IMR-90 (cell line): ENCODE measurements at regions of chr2 and their contacts with region 1.

Region 1: GRCh38 chr2:186589612-186590349 is at the start of gene ITGAV:
- DNase-seq: peak; percentile 88
- ATAC-seq: peak; percentile 97
- H3K4me3 ChIP-seq: peak within 1 kb of the TSS; percentile 83
- H3K27ac ChIP-seq: peak within 1 kb of the TSS; percentile 83
- H3K4me1 ChIP-seq: peaks cover 8% of the 10 kb centered on the region
- H3K27me3 ChIP-seq: no peaks in the 10 kb centered on the region
- CTCF ChIP-seq: no peak
- POLR2A ChIP-seq: peak; percentile 96
- RAD21 ChIP-seq: no peak
- total RNA-seq, gene ITGAV: 181 and 204 TPM in 2 replicates

Region 2: DNA sequence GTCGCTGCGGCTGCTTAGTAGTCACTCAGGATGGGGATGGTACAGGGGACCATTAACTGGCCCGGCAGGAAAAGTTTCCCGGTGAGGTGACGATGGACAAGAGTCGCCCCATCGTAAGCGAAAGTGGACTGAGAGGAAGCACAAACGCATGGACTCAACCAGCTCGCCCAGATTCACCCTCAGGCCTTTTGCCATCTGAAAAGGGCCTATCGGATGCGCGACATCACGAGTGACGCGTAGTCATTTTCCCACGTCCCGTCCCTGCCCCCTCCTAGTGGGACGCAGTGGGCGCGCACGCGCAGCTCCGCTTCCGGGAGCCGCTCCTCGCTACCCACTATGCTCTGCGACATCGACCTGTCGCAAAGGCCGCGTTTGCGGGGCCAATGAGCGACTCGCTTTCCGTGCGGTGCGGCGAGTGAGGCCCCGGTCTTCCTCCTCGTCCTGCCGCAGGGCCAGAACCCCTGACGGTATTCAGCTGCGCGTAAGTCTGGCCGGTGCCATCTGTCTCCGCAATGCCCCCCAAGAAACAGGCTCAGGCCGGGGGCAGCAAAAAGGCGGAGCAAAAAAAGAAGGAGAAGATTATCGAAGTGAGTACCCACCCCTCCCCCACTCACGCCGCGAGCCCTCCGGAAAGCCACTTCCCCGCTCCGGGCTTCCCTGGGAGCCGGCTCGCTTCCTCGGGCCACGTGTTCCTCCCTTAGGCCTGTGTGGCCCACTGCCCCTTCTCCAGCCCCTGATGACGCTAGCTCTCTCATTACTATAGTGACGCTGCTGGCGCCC is 103.7 kb before region 1 on chr2 and contains the start of gene ZC3H15:
- CTCF ChIA-PET with region 1: no interaction called
- POLR2A ChIA-PET with region 1: no interaction called
- dilution Hi-C with region 1: no loop called
- in situ Hi-C with region 1: no loop called
- intact Hi-C with region 1: no loop called
- DNase-seq: peak; percentile 98
- ATAC-seq: peak; percentile 98
- H3K4me3 ChIP-seq: peak within 1 kb of the TSS; percentile 71
- H3K27ac ChIP-seq: peak within 1 kb of the TSS; percentile 93
- H3K4me1 ChIP-seq: peaks cover 2% of the 10 kb centered on the region; the same call in 1 of the 2 replicates
- H3K27me3 ChIP-seq: no peaks in the 10 kb centered on the region
- CTCF ChIP-seq: no peak
- POLR2A ChIP-seq: peak; percentile 97
- RAD21 ChIP-seq: peak; percentile 0; the same call in 1 of the 2 replicates
- total RNA-seq, gene ZC3H15: 22.9 and 65.0 TPM in 2 replicates

Region 3: DNA sequence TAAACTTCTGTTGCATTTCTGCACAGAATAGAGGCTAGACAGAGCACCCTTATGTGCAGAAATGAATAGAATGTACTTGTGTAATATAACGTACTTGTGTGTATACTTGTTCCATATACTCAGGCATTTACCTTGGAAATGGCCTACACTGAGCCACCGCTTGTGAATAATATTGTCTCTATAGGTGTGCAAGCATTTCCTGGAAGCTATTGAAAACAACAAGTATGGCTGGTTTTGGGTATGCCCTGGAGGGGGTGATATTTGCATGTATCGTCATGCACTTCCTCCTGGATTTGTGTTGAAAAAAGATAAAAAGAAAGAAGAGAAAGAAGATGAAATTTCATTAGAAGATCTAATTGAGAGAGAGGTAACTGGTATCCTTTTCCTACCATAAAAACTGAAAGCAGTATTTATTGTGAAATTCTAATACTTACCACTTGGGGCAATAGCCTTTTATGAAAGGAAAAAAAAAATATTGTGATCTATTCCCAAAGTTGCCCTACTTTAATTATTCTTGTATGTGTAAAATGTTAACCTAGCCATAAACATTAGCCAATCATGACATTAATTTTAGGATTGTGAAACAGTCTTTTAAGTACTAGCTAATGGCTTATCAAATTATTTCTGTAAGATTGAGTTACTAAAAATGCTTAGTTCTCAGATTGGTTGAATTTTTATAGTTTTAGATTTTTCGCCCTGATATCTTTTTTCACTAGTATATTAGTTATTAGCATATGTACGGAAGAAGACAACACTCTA is 85.8 kb before region 1 on chr2:
- CTCF ChIA-PET with region 1: interaction called, 3 read pairs
- POLR2A ChIA-PET with region 1: no interaction called
- dilution Hi-C with region 1: no loop called
- in situ Hi-C with region 1: no loop called
- intact Hi-C with region 1: loop called (anchors 2 kb)
- DNase-seq: peak; percentile 37
- ATAC-seq: peak; percentile 74; the same call in 1 of the 2 replicates
- H3K4me3 ChIP-seq: no peak overlapping the region
- H3K27ac ChIP-seq: no peak overlapping the region
- H3K4me1 ChIP-seq: no peaks in the 10 kb centered on the region
- H3K27me3 ChIP-seq: no peaks in the 10 kb centered on the region
- CTCF ChIP-seq: peak; percentile 62
- POLR2A ChIP-seq: no peak
- RAD21 ChIP-seq: peak; percentile 73

Region 4: DNA sequence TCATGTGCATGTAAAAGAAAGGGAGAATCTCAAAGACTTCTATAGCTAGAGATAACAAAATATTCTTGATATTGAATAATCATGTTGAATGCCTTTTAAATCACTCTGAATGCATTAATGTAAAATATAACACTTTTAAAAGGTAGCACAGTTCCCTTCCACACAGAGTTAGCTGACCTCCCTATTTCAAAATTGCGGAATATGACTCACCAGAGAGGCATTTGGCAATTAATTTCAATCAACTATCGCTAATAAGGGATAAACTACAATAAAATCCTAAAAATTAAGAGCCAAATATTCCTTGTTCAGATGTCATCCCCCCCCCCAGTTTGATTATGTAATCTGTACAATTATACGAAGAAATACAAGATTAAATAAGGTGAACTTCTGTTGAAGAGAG is 74.4 kb before region 1 on chr2:
- CTCF ChIA-PET with region 1: no interaction called
- POLR2A ChIA-PET with region 1: interaction called, 19 read pairs
- dilution Hi-C with region 1: no loop called
- in situ Hi-C with region 1: no loop called
- intact Hi-C with region 1: no loop called
- DNase-seq: no peak
- ATAC-seq: peak; percentile 45
- H3K4me3 ChIP-seq: no peak overlapping the region
- H3K27ac ChIP-seq: no peak overlapping the region
- H3K4me1 ChIP-seq: no peaks in the 10 kb centered on the region
- H3K27me3 ChIP-seq: no peaks in the 10 kb centered on the region
- CTCF ChIP-seq: no peak
- POLR2A ChIP-seq: no peak
- RAD21 ChIP-seq: no peak

Region 5: DNA sequence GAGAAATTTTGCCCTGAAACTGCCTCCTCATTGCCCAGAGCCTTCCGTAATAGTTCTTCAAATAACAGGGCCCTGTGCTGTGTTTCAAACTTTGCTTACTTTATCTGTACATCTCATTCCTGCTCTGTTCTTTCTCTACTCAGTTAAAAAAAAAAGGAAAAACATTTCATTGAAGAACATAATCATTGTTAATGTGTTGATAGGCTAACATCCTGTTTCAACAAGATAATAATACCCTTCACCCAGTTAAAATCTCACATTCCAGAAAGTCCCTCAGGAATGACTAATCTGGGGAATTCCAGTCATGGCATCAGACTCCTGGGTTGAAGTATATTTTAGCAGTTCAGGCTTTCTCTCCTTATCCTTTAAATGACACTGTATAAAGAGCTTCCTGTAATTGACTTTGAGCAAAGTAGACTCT is 45.5 kb before region 1 on chr2:
- CTCF ChIA-PET with region 1: no interaction called
- POLR2A ChIA-PET with region 1: interaction called, 5 read pairs
- dilution Hi-C with region 1: no loop called
- in situ Hi-C with region 1: no loop called
- intact Hi-C with region 1: loop called (anchors 1 kb)
- DNase-seq: peak; percentile 93
- ATAC-seq: peak; percentile 75
- H3K4me3 ChIP-seq: no peak overlapping the region; the same call in 1 of the 2 replicates
- H3K27ac ChIP-seq: peak overlapping the region; percentile 77; the same call in 1 of the 2 replicates
- H3K4me1 ChIP-seq: peaks cover 13% of the 10 kb centered on the region
- H3K27me3 ChIP-seq: no peaks in the 10 kb centered on the region
- CTCF ChIP-seq: no peak
- POLR2A ChIP-seq: peak; percentile 19; the same call in 1 of the 2 replicates
- RAD21 ChIP-seq: 0 out of 2 replicates have a peak, but pooled peaks have one; percentile 18

Region 6: GRCh38 chr2:186554850-186555735 is 34.7 kb before region 1 on chr2:
- CTCF ChIA-PET with region 1: no interaction called
- POLR2A ChIA-PET with region 1: no interaction called
- dilution Hi-C with region 1: no loop called
- in situ Hi-C with region 1: no loop called
- intact Hi-C with region 1: no loop called
- DNase-seq: peak; percentile 38
- ATAC-seq: no peak
- H3K4me3 ChIP-seq: no peak overlapping the region
- H3K27ac ChIP-seq: no peak overlapping the region
- H3K4me1 ChIP-seq: no peaks in the 10 kb centered on the region; the same call in 1 of the 2 replicates
- H3K27me3 ChIP-seq: no peaks in the 10 kb centered on the region
- CTCF ChIP-seq: no peak
- POLR2A ChIP-seq: no peak
- RAD21 ChIP-seq: no peak

Region 7: DNA sequence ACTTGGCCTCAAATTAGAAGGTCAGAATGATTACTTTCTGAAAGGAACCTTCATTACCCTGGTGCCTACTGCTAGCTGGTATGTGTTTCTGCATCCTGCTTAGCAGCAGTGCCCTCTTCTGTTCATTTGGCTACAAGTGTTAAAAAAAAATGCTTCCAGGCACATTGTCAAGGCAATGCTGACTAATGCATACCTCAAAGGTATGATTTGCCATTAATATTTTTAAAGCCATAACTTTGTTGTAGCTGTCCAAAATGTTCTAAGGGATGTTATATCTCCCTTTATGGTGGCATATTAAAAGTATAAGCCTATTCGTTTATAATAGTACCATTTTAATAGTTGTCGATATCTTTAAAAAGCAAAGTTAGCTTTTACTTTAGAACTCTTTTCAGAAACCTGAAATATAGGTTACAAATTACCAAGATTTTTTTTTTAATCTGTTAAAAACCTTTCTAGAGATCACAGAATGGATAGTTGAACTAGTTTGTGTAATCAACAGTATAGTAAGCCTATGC is 52.1 kb after region 1 on chr2:
- CTCF ChIA-PET with region 1: interaction called, 4 read pairs
- POLR2A ChIA-PET with region 1: no interaction called
- dilution Hi-C with region 1: no loop called
- in situ Hi-C with region 1: no loop called
- intact Hi-C with region 1: loop called (anchors 1 kb)
- DNase-seq: peak; percentile 78
- ATAC-seq: peak; percentile 87
- H3K4me3 ChIP-seq: no peak overlapping the region
- H3K27ac ChIP-seq: no peak overlapping the region
- H3K4me1 ChIP-seq: peaks cover 14% of the 10 kb centered on the region
- H3K27me3 ChIP-seq: no peaks in the 10 kb centered on the region
- CTCF ChIP-seq: peak; percentile 86
- POLR2A ChIP-seq: no peak
- RAD21 ChIP-seq: peak; percentile 95

Region 8: DNA sequence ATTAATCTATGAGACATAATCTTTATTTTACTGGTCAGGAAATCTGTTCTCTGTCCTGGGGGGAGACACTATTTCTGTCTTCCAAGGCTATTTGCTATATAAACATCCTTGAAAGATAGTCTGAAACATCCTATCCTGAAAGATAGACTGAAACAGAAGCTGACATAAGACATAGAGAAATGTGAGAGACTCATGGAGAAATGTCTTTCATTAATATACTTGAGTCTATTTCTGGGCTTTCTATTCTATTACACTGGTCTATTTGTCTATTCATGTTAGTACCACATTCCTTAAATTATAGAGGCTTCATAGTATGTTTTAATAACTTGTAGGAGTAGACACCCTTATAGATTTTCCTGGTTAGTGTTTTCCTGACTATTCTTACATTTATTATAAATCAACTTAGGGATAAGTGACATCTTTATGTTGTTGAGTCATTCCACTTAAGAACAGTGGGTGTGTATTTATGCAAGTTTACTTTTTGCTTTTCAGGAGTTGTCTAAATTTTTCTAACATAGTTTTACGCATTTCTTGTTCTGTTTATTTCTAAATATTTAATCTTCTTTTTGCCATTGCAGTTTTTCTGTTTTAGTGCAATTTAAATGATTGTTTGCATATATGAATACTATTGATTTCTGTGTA is 504.1 kb after region 1 on chr2:
- CTCF ChIA-PET with region 1: no interaction called
- POLR2A ChIA-PET with region 1: no interaction called
- dilution Hi-C with region 1: no loop called
- in situ Hi-C with region 1: no loop called
- intact Hi-C with region 1: no loop called
- DNase-seq: no peak
- ATAC-seq: no peak
- H3K4me3 ChIP-seq: no peak overlapping the region
- H3K27ac ChIP-seq: no peak overlapping the region
- H3K4me1 ChIP-seq: no peaks in the 10 kb centered on the region
- H3K27me3 ChIP-seq: no peaks in the 10 kb centered on the region
- CTCF ChIP-seq: no peak
- POLR2A ChIP-seq: no peak
- RAD21 ChIP-seq: no peak